CD4-positive, alpha-beta T cell (primary cell): ENCODE measurements at regions of chr1 and their contacts with region 1.

Region 1: GRCh38 chr1:46197964-46198811 is at the start of gene POMGNT1:
- DNase-seq: peak; percentile 53 to 90 (median 72)
- ATAC-seq: peak; percentile 92
- H3K4me3 ChIP-seq: peak within 1 kb of the TSS; percentile 81
- H3K4me3 Mint-ChIP-seq: peak within 1 kb of the TSS; percentile 87
- H3K27ac ChIP-seq: peak within 1 kb of the TSS in 1 of 2 donors; percentile 37
- H3K27ac Mint-ChIP-seq: peak within 1 kb of the TSS; percentile 71
- H3K4me1 ChIP-seq: peaks cover 34% of the 10 kb centered on the region
- H3K4me1 Mint-ChIP-seq: peaks cover 36% of the 10 kb centered on the region
- H3K27me3 ChIP-seq: no peaks in the 10 kb centered on the region
- H3K27me3 Mint-ChIP-seq: no peaks in the 10 kb centered on the region
- CTCF ChIP-seq: no peak
- total RNA-seq, gene POMGNT1: 21.1 to 29.0 TPM

Region 2: GRCh38 chr1:45694823-45695222 is 503.4 kb before region 1 on chr1:
- CTCF ChIA-PET with region 1: no interaction called
- POLR2A ChIA-PET with region 1: no interaction called
- intact Hi-C with region 1: loop called in 1 of 2 experiments (anchors 5 kb)
- DNase-seq: no peak
- ATAC-seq: no peak
- H3K4me3 ChIP-seq: no peak overlapping the region
- H3K4me3 Mint-ChIP-seq: no peak overlapping the region
- H3K27ac ChIP-seq: no peak overlapping the region
- H3K27ac Mint-ChIP-seq: no peak overlapping the region
- H3K4me1 ChIP-seq: peaks cover 5% of the 10 kb centered on the region
- H3K4me1 Mint-ChIP-seq: no peaks in the 10 kb centered on the region
- H3K27me3 ChIP-seq: no peaks in the 10 kb centered on the region
- H3K27me3 Mint-ChIP-seq: no peaks in the 10 kb centered on the region
- CTCF ChIP-seq: no peak

Region 3: GRCh38 chr1:46166521-46167462 is 31.4 kb before region 1 on chr1:
- CTCF ChIA-PET with region 1: no interaction called
- POLR2A ChIA-PET with region 1: interaction called, 10 read pairs
- intact Hi-C with region 1: no loop called
- DNase-seq: peak; percentile 15 to 72 (median 55)
- ATAC-seq: peak; percentile 87
- H3K4me3 ChIP-seq: peak overlapping the region; percentile 69
- H3K4me3 Mint-ChIP-seq: peak overlapping the region; percentile 93
- H3K27ac ChIP-seq: peak overlapping the region; percentile 44 to 63
- H3K27ac Mint-ChIP-seq: peak overlapping the region; percentile 93
- H3K4me1 ChIP-seq: peaks cover 16% of the 10 kb centered on the region
- H3K4me1 Mint-ChIP-seq: peaks cover 18% of the 10 kb centered on the region
- H3K27me3 ChIP-seq: no peaks in the 10 kb centered on the region
- H3K27me3 Mint-ChIP-seq: no peaks in the 10 kb centered on the region
- CTCF ChIP-seq: no peak

Region 4: DNA sequence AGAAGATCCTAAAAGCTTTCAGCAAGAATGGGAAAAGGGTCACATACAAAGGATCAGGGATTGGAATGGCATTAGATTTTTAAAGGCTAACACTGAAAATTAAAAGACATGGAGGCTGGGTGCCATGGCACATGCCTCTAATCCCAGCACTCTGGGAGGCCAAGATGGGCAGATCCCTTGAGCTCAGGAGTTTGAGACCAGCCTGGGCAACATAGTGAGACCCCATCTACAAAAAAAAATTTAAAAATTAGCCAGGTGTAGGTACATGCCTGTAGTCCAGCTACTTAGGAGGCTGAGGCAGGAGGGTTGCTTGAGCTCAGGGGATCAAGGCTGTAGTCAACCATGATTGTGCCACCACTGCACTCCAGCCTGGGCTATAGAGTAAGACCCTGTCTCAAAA is 17.3 kb after region 1 on chr1:
- CTCF ChIA-PET with region 1: no interaction called
- POLR2A ChIA-PET with region 1: no interaction called
- intact Hi-C with region 1: no loop called
- DNase-seq: no peak
- ATAC-seq: no peak
- H3K4me3 ChIP-seq: no peak overlapping the region
- H3K4me3 Mint-ChIP-seq: no peak overlapping the region
- H3K27ac ChIP-seq: no peak overlapping the region
- H3K27ac Mint-ChIP-seq: no peak overlapping the region
- H3K4me1 ChIP-seq: no peaks in the 10 kb centered on the region
- H3K4me1 Mint-ChIP-seq: no peaks in the 10 kb centered on the region
- H3K27me3 ChIP-seq: no peaks in the 10 kb centered on the region
- H3K27me3 Mint-ChIP-seq: no peaks in the 10 kb centered on the region
- CTCF ChIP-seq: no peak

Region 5: GRCh38 chr1:46247436-46248121 is 49.4 kb after region 1 on chr1 and contains the start of gene RAD54L:
- CTCF ChIA-PET with region 1: no interaction called
- POLR2A ChIA-PET with region 1: interaction called, 3 read pairs
- intact Hi-C with region 1: loop called in 1 of 2 experiments (anchors 1 kb)
- DNase-seq: peak; percentile 92 to 99 (median 94)
- ATAC-seq: peak; percentile 96
- H3K4me3 ChIP-seq: peak within 1 kb of the TSS; percentile 83
- H3K4me3 Mint-ChIP-seq: peak within 1 kb of the TSS; percentile 89
- H3K27ac ChIP-seq: no peak within 1 kb of the TSS
- H3K27ac Mint-ChIP-seq: peak within 1 kb of the TSS; percentile 36
- H3K4me1 ChIP-seq: peaks cover 21% of the 10 kb centered on the region
- H3K4me1 Mint-ChIP-seq: peaks cover 26% of the 10 kb centered on the region
- H3K27me3 ChIP-seq: no peaks in the 10 kb centered on the region
- H3K27me3 Mint-ChIP-seq: no peaks in the 10 kb centered on the region
- CTCF ChIP-seq: no peak
- total RNA-seq, gene RAD54L: 0.33 to 1.0 TPM